ENCODE measurements at regions of chr7 and their contacts with region 1.

Region 1: GRCh38 chr7:43906331-43907010 is at the start of gene URGCP:
- DNase-seq: no peak
- H3K4me3 ChIP-seq: peak within 1 kb of the TSS; percentile 79 to 96 (median 86)
- H3K27ac ChIP-seq: peak within 1 kb of the TSS; percentile 91 to 93 (median 92)
- H3K4me1 ChIP-seq: peaks cover 31 to 47% (median 42%) of the 10 kb centered on the region in 4 donors
- H3K27me3 ChIP-seq: no peaks in the 10 kb centered on the region
- CTCF ChIP-seq: no peak
- EP300 ChIP-seq: no peak
- POLR2A ChIP-seq: no peak
- total RNA-seq, gene URGCP: 27.0 to 51.3 (median 40.0) TPM

Region 2: GRCh38 chr7:43869867-43870240 is 36.6 kb before region 1 on chr7:
- intact Hi-C with region 1: loop called (anchors 5 kb)
- DNase-seq: no peak
- H3K4me3 ChIP-seq: peak overlapping the region; percentile 87 to 96 (median 94)
- H3K27ac ChIP-seq: peak overlapping the region; percentile 85 to 93 (median 90)
- H3K4me1 ChIP-seq: peaks cover 30 to 42% (median 41%) of the 10 kb centered on the region in 4 donors
- H3K27me3 ChIP-seq: no peaks in the 10 kb centered on the region
- CTCF ChIP-seq: no peak
- EP300 ChIP-seq: no peak
- POLR2A ChIP-seq: no peak

Region 3: GRCh38 chr7:43925984-43926797 is 19.7 kb after region 1 on chr7 and contains the start of gene UBE2D4:
- intact Hi-C with region 1: loop called (anchors 1 kb)
- DNase-seq: peak; percentile 95
- H3K4me3 ChIP-seq: peak within 1 kb of the TSS; percentile 75 to 89 (median 82)
- H3K27ac ChIP-seq: peak within 1 kb of the TSS; percentile 97 to 98 (median 97)
- H3K4me1 ChIP-seq: peaks cover 14 to 26% (median 24%) of the 10 kb centered on the region in 4 donors
- H3K27me3 ChIP-seq: no peaks in the 10 kb centered on the region
- CTCF ChIP-seq: peak in 1 of 3 experiments; percentile 3
- EP300 ChIP-seq: no peak
- POLR2A ChIP-seq: peak; percentile 95
- total RNA-seq, gene UBE2D4: 20.1 to 36.4 (median 26.3) TPM

Region 4: DNA sequence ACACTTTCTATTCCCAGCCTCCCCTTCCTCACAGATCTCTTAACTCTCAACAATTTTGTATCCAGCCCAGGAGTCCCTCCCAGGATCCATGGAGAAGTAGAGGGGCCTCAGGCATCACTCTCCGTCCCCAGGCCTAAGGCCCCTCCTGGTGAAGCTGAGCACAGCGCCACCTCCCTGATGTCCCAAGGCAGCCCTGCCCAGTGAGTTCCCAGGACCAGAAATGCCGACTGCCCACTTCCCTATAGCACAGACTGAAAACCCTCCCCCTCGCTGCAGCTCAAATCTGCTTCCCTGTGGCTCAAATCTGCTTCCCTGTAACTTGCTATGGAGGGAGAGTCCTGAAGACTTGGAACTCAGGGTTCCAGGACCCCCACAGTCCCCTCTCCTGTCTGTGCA is 329.9 kb after region 1 on chr7:
- intact Hi-C with region 1: no loop called
- DNase-seq: no peak
- H3K4me3 ChIP-seq: no peak overlapping the region
- H3K27ac ChIP-seq: no peak overlapping the region
- H3K4me1 ChIP-seq: peaks cover 0 to 6% (median 4%) of the 10 kb centered on the region in 4 donors
- H3K27me3 ChIP-seq: peaks cover 0 to 24% (median 0%) of the 10 kb centered on the region in 4 donors
- CTCF ChIP-seq: no peak
- EP300 ChIP-seq: no peak
- POLR2A ChIP-seq: no peak

Measured in esophagus muscularis mucosa (tissue), 4 donors.